ENCODE measurements at regions of chr11 and their contacts with region 1.

Region 1: GRCh38 chr11:64269380-64270234 is 14.9 kb downstream of the BAD start:
- DNase-seq: peak; percentile 100
- H3K4me3 ChIP-seq: peak overlapping the region; percentile 1 to 66 (median 58)
- H3K27ac ChIP-seq: peak overlapping the region; percentile 76
- H3K4me1 ChIP-seq: peaks cover 38% of the 10 kb centered on the region
- H3K27me3 ChIP-seq: no peaks in the 10 kb centered on the region
- CTCF ChIP-seq: no peak
- POLR2A ChIP-seq: peak; percentile 73

Region 2: GRCh38 chr11:64165849-64166635 is 103.6 kb before region 1 on chr11 and contains the start of gene MACROD1:
- CTCF ChIA-PET with region 1: no interaction called
- POLR2A ChIA-PET with region 1: no interaction called
- dilution Hi-C with region 1: no loop called
- intact Hi-C with region 1: no loop called
- DNase-seq: peak; percentile 84
- H3K4me3 ChIP-seq: peak within 1 kb of the TSS; percentile 25 to 50 (median 49)
- H3K27ac ChIP-seq: peak within 1 kb of the TSS; percentile 1
- H3K4me1 ChIP-seq: peaks cover 7% of the 10 kb centered on the region
- H3K27me3 ChIP-seq: no peaks in the 10 kb centered on the region
- CTCF ChIP-seq: no peak
- POLR2A ChIP-seq: peak; percentile 71
- total RNA-seq, gene MACROD1: 16.2 and 16.6 TPM in 2 replicates

Region 3: DNA sequence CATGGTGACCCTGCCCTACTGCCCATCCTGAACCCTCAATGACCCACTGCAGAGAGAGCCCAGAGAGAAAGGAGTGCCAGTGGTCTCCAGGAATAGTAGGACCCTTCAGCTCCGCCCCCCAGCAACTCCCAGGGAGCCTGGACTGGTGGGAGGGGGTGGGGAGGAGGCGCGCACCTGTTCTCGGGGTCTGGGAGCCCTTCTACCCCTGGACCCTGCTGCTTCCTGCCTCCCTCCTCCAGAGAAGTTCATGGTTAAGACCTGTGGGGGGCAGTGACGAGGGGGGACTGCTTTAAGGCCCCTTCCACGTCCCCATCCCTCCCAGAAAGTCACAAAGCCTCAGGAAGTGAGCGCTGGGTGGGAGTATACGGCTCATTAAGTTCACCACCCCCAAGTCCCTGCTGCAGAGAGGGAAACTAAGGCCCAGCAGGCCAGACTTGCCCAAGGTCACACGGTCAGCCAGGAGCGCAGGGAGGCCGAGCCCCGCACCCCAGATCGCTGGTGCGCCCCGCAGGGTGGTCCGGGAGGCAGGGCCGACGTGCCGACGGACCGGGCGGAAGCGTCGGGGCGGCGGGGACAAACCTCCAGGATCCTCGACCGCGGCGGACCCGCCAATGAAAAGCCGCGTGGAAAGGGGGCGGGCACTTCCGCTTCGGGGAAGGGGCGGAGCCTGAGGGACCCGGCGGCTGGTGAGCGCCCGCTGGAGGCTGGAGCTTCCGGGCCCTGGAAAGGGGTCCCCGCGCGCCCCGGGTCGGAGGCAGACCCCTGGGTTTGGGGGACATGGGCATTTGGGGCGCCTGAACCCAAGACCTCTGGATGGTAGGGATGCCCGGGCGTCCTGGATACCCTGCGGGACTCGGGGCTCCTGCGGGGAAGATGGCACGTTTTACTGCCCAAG is 43.7 kb before region 1 on chr11 and contains the starts of genes NUDT22 and TRPT1:
- CTCF ChIA-PET with region 1: no interaction called
- POLR2A ChIA-PET with region 1: no interaction called
- dilution Hi-C with region 1: no loop called
- intact Hi-C with region 1: loop called (anchors 1 kb)
- DNase-seq: peak; percentile 83
- H3K4me3 ChIP-seq: peak within 1 kb of the TSS; percentile 62 to 70 (median 66)
- H3K27ac ChIP-seq: peak within 1 kb of the TSS; percentile 55
- H3K4me1 ChIP-seq: peaks cover 14% of the 10 kb centered on the region
- H3K27me3 ChIP-seq: no peaks in the 10 kb centered on the region
- CTCF ChIP-seq: peak; percentile 3 to 13
- POLR2A ChIP-seq: peak; percentile 90
- total RNA-seq, gene NUDT22: 37.1 and 37.8 TPM in 2 replicates
- total RNA-seq, gene TRPT1: 26.2 and 28.0 TPM in 2 replicates

Region 4: GRCh38 chr11:64246871-64247728 is 22.5 kb before region 1 on chr11 and contains the start of gene PPP1R14B:
- CTCF ChIA-PET with region 1: interaction called, 60 read pairs
- POLR2A ChIA-PET with region 1: interaction called, 10 read pairs
- dilution Hi-C with region 1: no loop called
- intact Hi-C with region 1: loop called (anchors 1 kb)
- DNase-seq: peak; percentile 80
- H3K4me3 ChIP-seq: peak within 1 kb of the TSS; percentile 67 to 78 (median 75)
- H3K27ac ChIP-seq: peak within 1 kb of the TSS; percentile 47
- H3K4me1 ChIP-seq: peaks cover 28% of the 10 kb centered on the region
- H3K27me3 ChIP-seq: no peaks in the 10 kb centered on the region
- CTCF ChIP-seq: no peak
- POLR2A ChIP-seq: peak; percentile 14
- total RNA-seq, gene PPP1R14B: 431 TPM in 2 replicates

Region 5: GRCh38 chr11:64317957-64318693 is 48.5 kb after region 1 on chr11 and contains the start of gene PRDX5:
- CTCF ChIA-PET with region 1: interaction called, 3 read pairs
- POLR2A ChIA-PET with region 1: no interaction called
- dilution Hi-C with region 1: no loop called
- intact Hi-C with region 1: loop called (anchors 1 kb)
- DNase-seq: peak; percentile 96
- H3K4me3 ChIP-seq: peak within 1 kb of the TSS; percentile 57 to 76 (median 75)
- H3K27ac ChIP-seq: peak within 1 kb of the TSS; percentile 87
- H3K4me1 ChIP-seq: peaks cover 10% of the 10 kb centered on the region
- H3K27me3 ChIP-seq: no peaks in the 10 kb centered on the region
- CTCF ChIP-seq: peak in 1 of 2 donors; percentile 32
- POLR2A ChIP-seq: peak; percentile 64
- total RNA-seq, gene PRDX5: 199 and 202 TPM in 2 replicates

Region 6: DNA sequence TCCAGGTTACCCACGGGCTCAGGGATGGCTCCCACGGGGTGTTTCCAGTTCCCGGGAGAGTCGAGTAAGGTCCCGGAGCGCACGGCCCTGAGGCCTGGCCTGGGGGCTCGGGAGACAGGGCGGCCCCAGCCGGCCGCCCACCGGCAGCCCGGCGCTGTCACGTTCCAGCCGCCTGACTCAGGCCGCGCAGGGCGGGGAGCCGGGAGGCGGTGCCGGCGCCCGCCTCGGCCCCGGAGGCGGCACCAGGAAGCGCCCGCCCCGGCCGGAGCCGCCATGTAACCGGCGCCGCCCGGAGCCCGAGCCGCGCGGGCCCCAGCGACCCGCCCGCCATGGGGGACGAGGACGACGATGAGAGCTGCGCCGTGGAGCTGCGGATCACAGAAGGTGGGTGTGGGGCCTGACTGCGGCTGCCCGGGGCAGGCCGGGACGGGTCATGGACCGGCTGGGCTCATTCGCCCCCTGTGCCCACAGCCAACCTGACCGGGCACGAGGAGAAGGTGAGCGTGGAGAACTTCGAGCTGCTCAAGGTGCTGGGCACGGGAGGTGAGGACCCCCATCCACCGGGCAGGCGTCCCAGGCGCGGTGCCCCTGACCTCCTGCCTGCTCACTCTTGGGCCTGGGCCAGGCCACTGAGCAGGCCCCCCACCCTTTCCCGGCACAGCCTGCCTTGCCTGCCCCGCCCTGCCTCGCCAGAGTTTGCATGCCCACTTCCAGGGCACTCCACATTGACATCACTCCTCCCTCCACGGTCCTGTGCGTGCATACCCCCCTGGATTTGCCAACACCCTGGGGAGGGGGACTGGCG is 89.5 kb after region 1 on chr11 and contains the start of gene RPS6KA4:
- CTCF ChIA-PET with region 1: interaction called, 10 read pairs
- POLR2A ChIA-PET with region 1: no interaction called
- dilution Hi-C with region 1: no loop called
- intact Hi-C with region 1: no loop called
- DNase-seq: peak; percentile 60
- H3K4me3 ChIP-seq: peak within 1 kb of the TSS; percentile 11 to 91 (median 33)
- H3K27ac ChIP-seq: peak within 1 kb of the TSS; percentile 70
- H3K4me1 ChIP-seq: peaks cover 22% of the 10 kb centered on the region
- H3K27me3 ChIP-seq: no peaks in the 10 kb centered on the region
- CTCF ChIP-seq: no peak
- POLR2A ChIP-seq: peak; percentile 92
- total RNA-seq, gene RPS6KA4: 41.8 and 44.1 TPM in 2 replicates

Region 7: DNA sequence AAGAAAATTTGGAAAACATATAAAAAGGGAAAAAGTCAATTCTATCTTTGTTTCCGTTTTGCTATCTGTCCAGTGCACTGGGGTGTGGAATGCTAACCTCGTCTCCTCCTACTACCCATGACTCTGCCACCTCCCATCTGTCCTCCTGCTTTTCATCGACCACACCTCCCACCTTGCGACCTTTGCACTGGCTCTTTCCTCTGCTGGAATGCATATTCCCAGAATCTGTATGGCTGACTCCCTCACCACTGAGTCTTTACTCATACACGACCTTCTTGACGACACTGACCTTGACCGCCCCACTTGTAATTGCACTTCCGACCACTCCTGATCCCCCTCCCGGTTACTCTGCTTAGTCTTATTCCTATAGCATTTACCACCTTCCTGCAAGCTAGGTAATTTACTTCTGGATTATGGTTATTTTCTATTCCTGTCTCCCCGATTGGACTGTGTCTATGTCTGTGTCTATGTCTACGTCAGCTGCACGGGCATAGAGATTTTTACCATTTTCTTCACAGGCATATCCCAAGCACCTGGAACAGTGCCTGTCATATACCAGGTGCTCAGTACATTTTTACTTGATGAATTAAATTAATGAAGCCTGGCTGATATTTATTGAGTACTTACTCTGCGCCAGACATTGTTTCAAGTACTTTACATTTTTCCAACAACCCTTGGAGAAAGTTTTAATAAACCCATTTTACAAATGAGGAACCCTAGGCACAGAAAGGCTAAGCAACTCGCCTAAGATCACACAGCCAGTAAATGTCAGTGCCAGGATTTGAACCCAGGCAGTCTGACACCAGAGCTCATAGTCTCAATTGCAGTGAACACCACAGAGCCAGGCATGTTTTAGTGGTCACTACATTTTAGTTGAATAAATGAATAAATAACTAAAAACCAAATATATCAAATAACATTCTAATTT is 232.2 kb after region 1 on chr11:
- CTCF ChIA-PET with region 1: no interaction called
- POLR2A ChIA-PET with region 1: no interaction called
- dilution Hi-C with region 1: no loop called
- intact Hi-C with region 1: no loop called
- DNase-seq: no peak
- H3K4me3 ChIP-seq: no peak overlapping the region
- H3K27ac ChIP-seq: no peak overlapping the region
- H3K4me1 ChIP-seq: no peaks in the 10 kb centered on the region
- H3K27me3 ChIP-seq: peaks cover 0 to 2% of the 10 kb centered on the region in 2 experiments
- CTCF ChIP-seq: no peak
- POLR2A ChIP-seq: no peak